SK-N-SH (cell line): ENCODE measurements at regions of chr2 and their contacts with region 1.

Region 1: GRCh38 chr2:27380626-27381545 is at the start of gene ZNF513:
- DNase-seq: peak; percentile 99
- H3K4me3 ChIP-seq: peak within 1 kb of the TSS; percentile 80 to 86
- H3K27ac ChIP-seq: peak within 1 kb of the TSS; percentile 68 to 95
- H3K4me1 ChIP-seq: peaks cover 15 to 53% of the 10 kb centered on the region in 2 experiments; a peak in 3 of 4 replicates
- H3K27me3 ChIP-seq: no peaks in the 10 kb centered on the region
- CTCF ChIP-seq: no peak
- EP300 ChIP-seq: no peak
- RAD21 ChIP-seq: no peak
- polyA plus RNA-seq, gene ZNF513: 53.8 and 63.7 TPM in 2 replicates

Region 2: DNA sequence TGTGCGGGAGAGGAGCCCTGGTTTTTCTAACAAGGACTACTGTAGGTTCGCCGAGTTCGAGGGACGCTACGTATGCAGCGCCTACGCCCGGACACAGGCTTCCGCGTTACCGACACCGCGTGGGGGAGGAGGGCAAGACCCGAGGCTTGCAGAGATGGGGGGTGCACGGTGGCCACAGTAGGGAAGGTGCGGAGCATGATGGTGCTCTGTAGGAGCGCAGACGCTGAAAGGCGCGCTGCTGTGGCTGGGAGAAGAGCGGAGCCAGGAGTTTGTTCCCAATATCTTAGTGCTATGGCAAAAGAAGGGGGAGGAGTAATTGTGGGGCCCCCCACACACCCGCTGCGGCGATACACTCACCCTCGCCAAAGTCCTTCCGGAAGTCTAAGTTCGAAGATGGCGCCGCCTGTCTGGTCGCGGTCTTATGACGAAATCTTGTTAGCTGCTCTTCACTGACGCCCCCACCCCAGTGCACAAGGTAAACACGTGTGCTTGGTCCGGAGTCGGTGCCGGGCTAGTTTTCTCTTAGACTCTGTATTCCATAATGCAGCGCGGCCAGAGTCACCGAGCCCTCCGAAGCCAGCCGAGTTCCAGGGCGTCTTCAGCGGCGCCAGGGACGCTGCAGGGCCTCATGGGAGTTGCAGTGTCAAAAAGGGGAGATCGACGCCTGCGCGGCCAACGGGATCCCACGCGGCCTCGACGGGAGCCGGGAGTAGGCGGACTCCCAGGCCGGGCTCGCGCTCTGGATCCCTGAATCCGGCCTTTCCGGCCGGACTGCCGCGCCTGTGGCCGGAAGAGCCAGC is 24.3 kb before region 1 on chr2 and contains the start of gene GTF3C2:
- CTCF ChIA-PET with region 1: interaction called, 3 read pairs
- POLR2A ChIA-PET with region 1: interaction called, 20 read pairs
- DNase-seq: peak; percentile 97
- H3K4me3 ChIP-seq: peak within 1 kb of the TSS; percentile 87 to 93
- H3K27ac ChIP-seq: peak within 1 kb of the TSS; percentile 90 to 93
- H3K4me1 ChIP-seq: peaks cover 7 to 19% of the 10 kb centered on the region in 2 experiments; a peak in 3 of 4 replicates
- H3K27me3 ChIP-seq: no peaks in the 10 kb centered on the region
- CTCF ChIP-seq: no peak
- EP300 ChIP-seq: peak in 1 of 2 experiments; percentile 24; a peak in 1 of 4 replicates
- RAD21 ChIP-seq: no peak
- polyA plus RNA-seq, gene GTF3C2: 65.8 and 76.0 TPM in 2 replicates

Region 3: GRCh38 chr2:27370026-27370815 is 10.7 kb before region 1 on chr2 and contains the starts of genes EIF2B4 and SNX17:
- CTCF ChIA-PET with region 1: interaction called, 36 read pairs
- POLR2A ChIA-PET with region 1: interaction called, 34 read pairs
- DNase-seq: peak; percentile 98
- H3K4me3 ChIP-seq: peak within 1 kb of the TSS; percentile 94 to 99
- H3K27ac ChIP-seq: peak within 1 kb of the TSS; percentile 79 to 89
- H3K4me1 ChIP-seq: peaks cover 11 to 22% of the 10 kb centered on the region in 2 experiments; a peak in 3 of 4 replicates
- H3K27me3 ChIP-seq: no peaks in the 10 kb centered on the region
- CTCF ChIP-seq: peak; percentile 84
- EP300 ChIP-seq: no peak; a peak in 1 of 4 replicates
- RAD21 ChIP-seq: peak; percentile 55
- polyA plus RNA-seq, gene EIF2B4: 51.7 and 56.0 TPM in 2 replicates
- polyA plus RNA-seq, gene SNX17: 128 and 145 TPM in 2 replicates

Region 4: GRCh38 chr2:27409321-27410073 is 28.6 kb after region 1 on chr2 and contains the start of gene PPM1G:
- CTCF ChIA-PET with region 1: interaction called, 28 read pairs
- POLR2A ChIA-PET with region 1: interaction called, 21 read pairs
- DNase-seq: peak; percentile 99
- H3K4me3 ChIP-seq: peak within 1 kb of the TSS; percentile 78 to 98
- H3K27ac ChIP-seq: peak within 1 kb of the TSS; percentile 82 to 90
- H3K4me1 ChIP-seq: peaks cover 0 to 6% of the 10 kb centered on the region in 2 experiments; a peak in 2 of 4 replicates
- H3K27me3 ChIP-seq: no peaks in the 10 kb centered on the region
- CTCF ChIP-seq: no peak
- EP300 ChIP-seq: no peak
- RAD21 ChIP-seq: no peak
- polyA plus RNA-seq, gene PPM1G: 99.7 and 113 TPM in 2 replicates